HEK293 (cell line): ENCODE measurements at regions of chr20 and their contacts with region 1.

Region 1: DNA sequence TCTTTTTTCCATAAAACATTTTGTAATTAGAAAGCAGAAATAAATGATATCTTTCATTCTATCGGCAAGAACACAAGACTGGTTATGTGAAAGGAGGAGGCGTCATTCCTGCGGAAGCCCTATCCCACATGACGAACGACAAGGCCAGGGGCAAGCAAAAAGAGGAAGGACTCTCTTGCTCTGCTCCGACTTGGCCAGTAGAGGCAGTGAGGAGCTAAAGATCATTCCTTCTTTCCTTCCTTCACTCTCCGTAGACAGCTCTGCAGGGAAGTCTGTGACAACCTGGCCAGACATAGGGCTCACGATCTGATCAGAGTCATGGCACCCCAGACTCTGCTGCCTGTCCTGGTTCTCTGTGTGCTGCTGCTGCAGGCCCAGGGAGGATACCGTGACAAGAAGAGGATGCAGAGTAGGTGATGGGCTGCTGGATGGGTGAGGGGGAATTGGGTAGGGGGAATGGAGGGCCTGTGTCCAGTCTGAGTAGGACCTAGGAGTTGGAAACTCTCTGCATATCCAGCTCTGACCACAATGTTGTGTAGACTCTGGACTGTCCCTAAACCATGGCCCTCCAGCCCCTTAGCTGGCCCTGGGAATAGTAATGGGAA is at the start of gene WFDC10A:
- H3K4me3 ChIP-seq: no peak within 1 kb of the TSS
- H3K27ac ChIP-seq: no peak within 1 kb of the TSS
- H3K4me1 ChIP-seq: no peaks in the 10 kb centered on the region
- CTCF ChIP-seq: peak; percentile 33; the same call in 1 of the 2 replicates

Region 2: DNA sequence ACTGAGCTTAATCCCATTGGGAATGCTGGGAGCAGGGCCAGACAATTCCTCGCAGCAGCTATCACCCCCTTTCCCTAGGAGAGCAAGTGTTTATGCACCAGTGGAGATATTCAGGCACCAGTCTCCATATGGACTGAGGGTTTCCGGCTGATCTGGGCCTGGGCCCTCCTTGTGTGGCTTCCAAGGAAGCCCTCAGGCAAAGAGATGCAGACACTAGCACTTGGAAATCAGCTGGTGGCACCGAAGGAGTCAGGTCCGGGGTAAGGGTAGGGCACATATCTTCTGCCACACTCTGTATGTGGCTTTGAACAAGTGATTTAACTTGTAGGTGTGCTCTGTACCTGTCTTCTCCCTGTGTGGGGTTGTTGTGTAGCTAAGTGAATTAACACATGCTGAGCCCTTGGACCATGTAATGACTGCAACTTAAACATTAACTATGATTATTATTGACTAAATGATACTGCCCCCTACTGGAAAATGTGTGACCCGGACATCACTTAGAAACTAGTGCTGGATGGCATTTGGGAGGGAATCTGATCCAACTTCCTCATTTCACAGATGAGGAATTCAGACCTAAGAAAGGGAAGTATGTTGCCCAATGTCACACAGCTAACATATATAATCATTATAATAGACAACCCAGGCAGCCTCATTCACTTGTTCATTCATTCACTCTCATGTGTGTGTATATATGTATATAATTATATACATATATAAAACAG is 179.3 kb before region 1 on chr20:
- CTCF ChIA-PET with region 1: no interaction called
- POLR2A ChIA-PET with region 1: no interaction called
- H3K4me3 ChIP-seq: no peak overlapping the region
- H3K27ac ChIP-seq: no peak overlapping the region
- H3K4me1 ChIP-seq: no peaks in the 10 kb centered on the region
- CTCF ChIP-seq: peak; percentile 24; the same call in 1 of the 2 replicates

Region 3: GRCh38 chr20:45647441-45648050 is 17.9 kb after region 1 on chr20:
- CTCF ChIA-PET with region 1: interaction called, 11 read pairs
- POLR2A ChIA-PET with region 1: no interaction called
- H3K4me3 ChIP-seq: no peak overlapping the region
- H3K27ac ChIP-seq: no peak overlapping the region
- H3K4me1 ChIP-seq: no peaks in the 10 kb centered on the region
- CTCF ChIP-seq: no peak

Region 4: GRCh38 chr20:46638134-46638897 is 1008.7 kb after region 1 on chr20:
- CTCF ChIA-PET with region 1: no interaction called
- POLR2A ChIA-PET with region 1: no interaction called
- H3K4me3 ChIP-seq: no peak overlapping the region
- H3K27ac ChIP-seq: no peak overlapping the region
- H3K4me1 ChIP-seq: no peaks in the 10 kb centered on the region
- CTCF ChIP-seq: no peak